Caco-2 (cell line): ENCODE measurements at regions of chr17 and their contacts with region 1.

Region 1: GRCh38 chr17:10327640-10328039 is 45.2 kb downstream of the MYH13 start:
- DNase-seq: peak; percentile 69 to 74
- H3K4me3 ChIP-seq: no peak overlapping the region
- H3K4me3 Mint-ChIP-seq: no peak overlapping the region
- H3K27ac Mint-ChIP-seq: no peak overlapping the region
- H3K4me1 ChIP-seq: no peaks in the 10 kb centered on the region
- H3K4me1 Mint-ChIP-seq: no peaks in the 10 kb centered on the region
- H3K27me3 ChIP-seq: no peaks in the 10 kb centered on the region
- H3K27me3 Mint-ChIP-seq: no peaks in the 10 kb centered on the region
- CTCF ChIP-seq: peak; percentile 69 to 71

Region 2: GRCh38 chr17:10618202-10618635 is 290.6 kb after region 1 on chr17:
- CTCF ChIA-PET with region 1: interaction called, 8 read pairs
- POLR2A ChIA-PET with region 1: no interaction called
- intact Hi-C with region 1: loop called (anchors 1 kb)
- DNase-seq: peak; percentile 54 to 61
- H3K4me3 ChIP-seq: no peak overlapping the region
- H3K4me3 Mint-ChIP-seq: no peak overlapping the region
- H3K27ac Mint-ChIP-seq: no peak overlapping the region
- H3K4me1 ChIP-seq: no peaks in the 10 kb centered on the region
- H3K4me1 Mint-ChIP-seq: peaks cover 7% of the 10 kb centered on the region
- H3K27me3 ChIP-seq: no peaks in the 10 kb centered on the region
- H3K27me3 Mint-ChIP-seq: no peaks in the 10 kb centered on the region
- CTCF ChIP-seq: peak; percentile 69 to 72